Activated CD8-positive, alpha-beta memory T cell treated with anti-CD3 and anti-CD28 coated beads, Interleukin-2, amount 10 ng/mL, durations not matched to agents 7 days and 5 days (primary cell): ENCODE measurements at regions of chr17 and their contacts with region 1.

Region 1: GRCh38 chr17:74786431-74787055 is 10.4 kb upstream of the NAT9 start:
- DNase-seq: no peak
- ATAC-seq: no peak
- H3K4me3 Mint-ChIP-seq: no peak overlapping the region
- H3K27ac Mint-ChIP-seq: peak overlapping the region; percentile 2
- H3K4me1 Mint-ChIP-seq: peaks cover 45% of the 10 kb centered on the region
- H3K27me3 Mint-ChIP-seq: no peaks in the 10 kb centered on the region

Region 2: DNA sequence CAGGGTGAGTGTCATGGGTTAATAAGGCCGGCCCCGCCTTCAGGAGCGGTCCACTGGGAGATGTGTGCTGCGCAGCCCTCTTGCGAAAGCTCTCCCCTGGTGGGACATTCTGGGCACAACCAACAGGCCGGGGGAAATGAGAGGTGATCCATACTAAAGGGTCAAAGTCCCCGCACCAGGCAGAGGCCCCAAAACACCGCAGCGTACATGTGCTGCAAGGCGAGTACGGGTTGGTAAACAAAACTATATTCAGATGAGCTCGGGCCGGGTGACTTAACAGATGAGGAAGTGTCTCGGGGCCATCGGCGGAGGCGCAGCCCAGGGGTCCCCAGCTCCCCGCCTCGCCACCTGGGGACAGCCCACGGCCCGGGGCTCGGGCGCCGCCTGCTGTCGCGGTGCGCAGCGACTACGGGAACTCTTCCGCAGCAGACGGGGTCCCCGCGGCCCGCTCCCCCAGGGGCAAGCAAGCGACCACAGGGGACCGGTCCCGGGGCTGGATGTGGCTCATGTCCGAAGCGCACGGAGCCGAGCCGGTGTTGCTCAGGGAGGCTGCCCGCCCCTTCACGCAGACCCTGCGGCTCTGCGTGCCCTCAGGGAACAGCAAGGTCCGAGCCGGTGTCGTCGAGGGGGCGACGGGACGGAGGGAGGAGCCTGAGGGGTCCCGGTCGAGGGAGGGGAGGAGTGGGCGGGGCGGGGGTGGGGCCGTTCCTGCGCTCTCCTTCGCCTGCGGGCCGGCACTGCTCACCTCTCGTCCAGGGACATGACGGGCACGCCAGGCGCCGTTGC is 49.8 kb before region 1 on chr17 and contains the start of gene RAB37:
- CTCF ChIA-PET with region 1: interaction called, 68 read pairs
- DNase-seq: peak; percentile 67
- ATAC-seq: peak; percentile 37
- H3K4me3 Mint-ChIP-seq: peak within 1 kb of the TSS; percentile 87
- H3K27ac Mint-ChIP-seq: peak within 1 kb of the TSS; percentile 91
- H3K4me1 Mint-ChIP-seq: peaks cover 47% of the 10 kb centered on the region
- H3K27me3 Mint-ChIP-seq: peaks cover 17% of the 10 kb centered on the region
- total RNA-seq, gene RAB37: 36.7 to 51.7 TPM

Region 3: DNA sequence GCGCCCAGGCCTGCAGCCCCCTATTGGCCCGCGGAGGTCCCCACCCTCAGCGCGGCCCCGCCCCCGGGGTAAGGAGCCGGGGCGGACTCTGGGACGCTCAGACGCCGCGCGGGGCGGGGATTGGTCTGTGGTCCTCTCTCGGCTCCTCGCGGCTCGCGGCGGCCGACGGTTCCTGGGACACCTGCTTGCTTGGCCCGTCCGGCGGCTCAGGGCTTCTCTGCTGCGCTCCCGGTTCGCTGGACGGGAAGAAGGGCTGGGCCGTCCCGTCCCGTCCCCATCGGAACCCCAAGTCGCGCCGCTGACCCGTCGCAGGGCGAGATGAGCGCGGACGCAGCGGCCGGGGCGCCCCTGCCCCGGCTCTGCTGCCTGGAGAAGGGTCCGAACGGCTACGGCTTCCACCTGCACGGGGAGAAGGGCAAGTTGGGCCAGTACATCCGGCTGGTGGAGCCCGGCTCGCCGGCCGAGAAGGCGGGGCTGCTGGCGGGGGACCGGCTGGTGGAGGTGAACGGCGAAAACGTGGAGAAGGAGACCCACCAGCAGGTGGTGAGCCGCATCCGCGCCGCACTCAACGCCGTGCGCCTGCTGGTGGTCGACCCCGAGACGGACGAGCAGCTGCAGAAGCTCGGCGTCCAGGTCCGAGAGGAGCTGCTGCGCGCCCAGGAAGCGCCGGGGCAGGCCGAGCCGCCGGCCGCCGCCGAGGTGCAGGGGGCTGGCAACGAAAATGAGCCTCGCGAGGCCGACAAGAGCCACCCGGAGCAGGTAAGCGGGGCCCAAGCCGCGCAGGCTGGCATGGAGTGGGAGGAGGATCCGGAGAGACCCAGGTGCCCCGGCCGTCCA is 37.8 kb before region 1 on chr17 and contains the start of gene NHERF1:
- CTCF ChIA-PET with region 1: interaction called, 92 read pairs
- DNase-seq: peak; percentile 96
- ATAC-seq: peak; percentile 87
- H3K4me3 Mint-ChIP-seq: peak within 1 kb of the TSS; percentile 100
- H3K27ac Mint-ChIP-seq: peak within 1 kb of the TSS; percentile 85
- H3K4me1 Mint-ChIP-seq: peaks cover 54% of the 10 kb centered on the region
- H3K27me3 Mint-ChIP-seq: no peaks in the 10 kb centered on the region
- total RNA-seq, gene NHERF1: 284 to 377 TPM

Region 4: GRCh38 chr17:74776044-74776977 is 10.2 kb before region 1 on chr17 and contains the start of gene NAT9:
- CTCF ChIA-PET with region 1: interaction called, 94 read pairs
- DNase-seq: peak; percentile 98
- ATAC-seq: peak; percentile 85
- H3K4me3 Mint-ChIP-seq: peak within 1 kb of the TSS; percentile 99
- H3K27ac Mint-ChIP-seq: peak within 1 kb of the TSS; percentile 86
- H3K4me1 Mint-ChIP-seq: peaks cover 62% of the 10 kb centered on the region
- H3K27me3 Mint-ChIP-seq: no peaks in the 10 kb centered on the region
- total RNA-seq, gene NAT9: 34.1 to 34.5 TPM

Region 5: GRCh38 chr17:74852237-74853047 is 65.9 kb after region 1 on chr17:
- CTCF ChIA-PET with region 1: interaction called, 262 read pairs
- DNase-seq: peak; percentile 68
- ATAC-seq: peak; percentile 87
- H3K4me3 Mint-ChIP-seq: peak overlapping the region; percentile 50
- H3K27ac Mint-ChIP-seq: no peak overlapping the region
- H3K4me1 Mint-ChIP-seq: peaks cover 3% of the 10 kb centered on the region
- H3K27me3 Mint-ChIP-seq: peaks cover 51% of the 10 kb centered on the region